CD8-positive, alpha-beta memory T cell (primary cell): ENCODE measurements at regions of chr9 and their contacts with region 1.

Region 1: GRCh38 chr9:129944506-129945116 is 98.4 kb downstream of the FNBP1 start:
- DNase-seq: peak; percentile 51 to 79 (median 67)
- H3K4me3 ChIP-seq: no peak overlapping the region
- H3K4me3 Mint-ChIP-seq: peak overlapping the region; percentile 8 to 59 (median 32)
- H3K27ac ChIP-seq: no peak overlapping the region
- H3K27ac Mint-ChIP-seq: peak overlapping the region; percentile 31 to 99 (median 86)
- H3K4me1 ChIP-seq: peaks cover 51% of the 10 kb centered on the region
- H3K4me1 Mint-ChIP-seq: peaks cover 46 to 67% (median 64%) of the 10 kb centered on the region in 3 donors
- H3K27me3 ChIP-seq: no peaks in the 10 kb centered on the region
- H3K27me3 Mint-ChIP-seq: no peaks in the 10 kb centered on the region

Region 2: GRCh38 chr9:129919841-129920240 is 24.8 kb before region 1 on chr9:
- CTCF ChIA-PET with region 1: no interaction called
- POLR2A ChIA-PET with region 1: no interaction called
- DNase-seq: no peak
- H3K4me3 ChIP-seq: no peak overlapping the region
- H3K4me3 Mint-ChIP-seq: peak overlapping the region in 3 of 7 donors; percentile 17 to 43 (median 28)
- H3K27ac ChIP-seq: no peak overlapping the region
- H3K27ac Mint-ChIP-seq: peak overlapping the region in 6 of 8 donors; percentile 43 to 88 (median 73)
- H3K4me1 ChIP-seq: no peaks in the 10 kb centered on the region
- H3K4me1 Mint-ChIP-seq: peaks cover 22 to 59% (median 55%) of the 10 kb centered on the region in 3 donors
- H3K27me3 ChIP-seq: no peaks in the 10 kb centered on the region
- H3K27me3 Mint-ChIP-seq: peaks cover 0 to 2% of the 10 kb centered on the region in 2 donors

Region 3: GRCh38 chr9:129954868-129955550 is 10.4 kb after region 1 on chr9:
- CTCF ChIA-PET with region 1: interaction called, 12 read pairs
- POLR2A ChIA-PET with region 1: interaction called, 4 read pairs
- DNase-seq: no peak
- H3K4me3 ChIP-seq: no peak overlapping the region
- H3K4me3 Mint-ChIP-seq: peak overlapping the region in 4 of 7 donors; percentile 18 to 39 (median 28)
- H3K27ac ChIP-seq: peak overlapping the region; percentile 11
- H3K27ac Mint-ChIP-seq: peak overlapping the region; percentile 3 to 90 (median 83)
- H3K4me1 ChIP-seq: peaks cover 25% of the 10 kb centered on the region
- H3K4me1 Mint-ChIP-seq: peaks cover 24 to 56% (median 52%) of the 10 kb centered on the region in 3 donors
- H3K27me3 ChIP-seq: no peaks in the 10 kb centered on the region
- H3K27me3 Mint-ChIP-seq: no peaks in the 10 kb centered on the region